GM12878 (cell line): ENCODE measurements at regions of chr2 and their contacts with region 1.

Region 1: GRCh38 chr2:78999406-78999805 is 26.1 kb upstream of the REG3G start:
- DNase-seq: no peak
- ATAC-seq: peak; percentile 65; the same call in 2 of the 3 replicates
- H3K4me3 ChIP-seq: no peak overlapping the region
- H3K27ac ChIP-seq: no peak overlapping the region
- H3K4me1 ChIP-seq: no peaks in the 10 kb centered on the region
- H3K27me3 ChIP-seq: no peaks in the 10 kb centered on the region; a peak in 2 of 4 replicates
- CTCF ChIP-seq: peak; percentile 33 to 44 (median 37); a peak in 5 of 6 replicates
- EP300 ChIP-seq: no peak
- POLR2A ChIP-seq: no peak
- RAD21 ChIP-seq: peak; percentile 56

Region 2: GRCh38 chr2:78351208-78351607 is 648.2 kb before region 1 on chr2:
- CTCF ChIA-PET with region 1: interaction called, 4 read pairs
- POLR2A ChIA-PET with region 1: no interaction called
- RAD21 ChIA-PET with region 1: no interaction called
- SMC1A ChIA-PET with region 1: no interaction called
- in situ Hi-C with region 1: no loop called
- intact Hi-C with region 1: loop called (anchors 1 kb)
- DNase-seq: no peak
- ATAC-seq: peak; percentile 74
- H3K4me3 ChIP-seq: no peak overlapping the region
- H3K27ac ChIP-seq: no peak overlapping the region
- H3K4me1 ChIP-seq: no peaks in the 10 kb centered on the region
- H3K27me3 ChIP-seq: no peaks in the 10 kb centered on the region
- CTCF ChIP-seq: no peak; a peak in 1 of 6 replicates
- EP300 ChIP-seq: no peak
- POLR2A ChIP-seq: no peak
- RAD21 ChIP-seq: no peak

Region 3: DNA sequence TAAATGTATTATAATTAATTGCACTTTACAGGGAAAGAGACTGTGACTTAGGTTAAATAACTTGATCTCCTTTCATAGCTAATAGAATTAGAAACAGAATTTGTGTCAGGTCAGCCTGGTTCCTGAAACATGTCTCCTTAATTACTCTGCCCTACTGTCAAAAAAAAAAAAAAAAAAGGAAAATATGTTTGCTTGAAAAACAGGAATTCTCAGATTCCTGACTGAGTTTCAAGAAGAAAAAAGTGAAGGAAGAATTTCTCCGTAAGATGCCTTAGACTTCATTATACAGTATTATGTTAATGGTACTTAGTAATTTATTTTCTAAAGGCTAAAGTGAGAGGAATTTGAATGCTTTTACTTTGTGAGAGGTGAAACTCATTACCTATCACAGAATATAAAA is 92.3 kb before region 1 on chr2:
- CTCF ChIA-PET with region 1: no interaction called
- POLR2A ChIA-PET with region 1: no interaction called
- RAD21 ChIA-PET with region 1: no interaction called
- SMC1A ChIA-PET with region 1: no interaction called
- in situ Hi-C with region 1: no loop called
- intact Hi-C with region 1: no loop called
- DNase-seq: no peak
- ATAC-seq: no peak
- H3K4me3 ChIP-seq: no peak overlapping the region
- H3K27ac ChIP-seq: no peak overlapping the region
- H3K4me1 ChIP-seq: no peaks in the 10 kb centered on the region
- H3K27me3 ChIP-seq: no peaks in the 10 kb centered on the region
- CTCF ChIP-seq: no peak
- EP300 ChIP-seq: no peak
- POLR2A ChIP-seq: no peak
- RAD21 ChIP-seq: no peak

Region 4: DNA sequence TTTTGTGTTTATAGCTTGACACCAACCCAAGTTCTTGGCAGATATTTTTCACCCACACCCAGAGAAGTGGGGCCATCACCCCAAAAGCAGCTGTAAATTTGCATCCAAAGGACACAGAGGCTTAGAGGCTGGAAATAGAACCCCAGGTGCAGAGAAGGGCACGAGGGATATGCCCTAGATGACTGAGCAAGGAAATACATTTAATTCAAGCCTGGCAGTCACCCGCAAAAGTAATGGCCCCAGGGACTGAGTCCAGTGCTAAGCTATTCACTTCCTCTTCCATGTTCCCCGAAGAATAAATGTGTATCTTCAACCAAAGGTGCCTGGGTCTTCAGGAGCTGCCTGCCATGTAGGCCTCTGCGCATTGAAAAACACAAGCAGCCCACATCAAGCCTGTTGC is 12.1 kb after region 1 on chr2:
- CTCF ChIA-PET with region 1: interaction called, 12 read pairs
- POLR2A ChIA-PET with region 1: no interaction called
- RAD21 ChIA-PET with region 1: no interaction called
- SMC1A ChIA-PET with region 1: interaction called, 3 read pairs
- in situ Hi-C with region 1: no loop called
- intact Hi-C with region 1: no loop called
- DNase-seq: no peak
- ATAC-seq: no peak
- H3K4me3 ChIP-seq: no peak overlapping the region
- H3K27ac ChIP-seq: no peak overlapping the region
- H3K4me1 ChIP-seq: no peaks in the 10 kb centered on the region
- H3K27me3 ChIP-seq: peaks cover 0 to 3% of the 10 kb centered on the region in 2 experiments; a peak in 2 of 4 replicates
- CTCF ChIP-seq: no peak
- EP300 ChIP-seq: no peak
- POLR2A ChIP-seq: no peak
- RAD21 ChIP-seq: no peak